A673 (cell line): ENCODE measurements at regions of chr7 and their contacts with region 1.

Region 1: DNA sequence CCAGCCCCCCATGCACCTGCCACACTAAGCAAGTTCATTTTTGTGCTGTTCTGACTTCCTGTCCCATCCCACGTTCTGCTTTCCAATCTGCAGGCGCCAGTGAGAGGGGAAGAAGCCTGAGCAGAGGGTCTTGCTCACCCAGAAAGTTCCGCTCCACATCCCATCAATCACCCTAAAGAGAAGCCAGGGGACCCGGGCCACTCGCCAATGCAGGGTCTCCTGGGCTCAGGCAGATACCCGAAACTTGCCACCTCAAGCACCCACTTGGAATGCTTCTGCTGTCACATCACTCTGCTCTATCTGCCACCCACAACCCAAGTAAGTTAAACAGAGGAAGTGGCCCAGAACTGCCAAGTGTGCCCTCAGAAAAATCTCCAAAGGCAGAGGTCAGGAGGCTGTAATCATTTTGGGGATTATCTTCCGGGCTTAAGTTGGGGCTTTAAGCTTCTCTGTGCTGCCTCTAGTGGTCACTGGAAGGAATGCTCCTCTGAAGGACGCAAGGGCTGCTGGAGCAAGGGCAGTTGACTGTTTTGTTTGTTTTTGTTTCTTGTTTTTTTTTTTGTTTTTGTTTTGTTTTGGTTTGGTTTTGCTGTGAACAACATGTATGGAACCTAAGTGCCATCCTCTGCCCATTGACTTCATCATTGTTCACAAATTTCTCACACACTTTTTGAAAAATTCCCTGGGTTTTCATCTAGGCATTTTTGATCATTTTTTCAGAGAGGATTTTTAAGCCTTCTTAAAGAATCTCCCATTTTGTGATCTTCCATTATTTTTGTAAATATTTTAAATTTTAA is 25.5 kb downstream of the PRR15 start:
- DNase-seq: peak; percentile 60
- H3K4me3 ChIP-seq: no peak overlapping the region
- H3K27ac ChIP-seq: no peak overlapping the region
- H3K4me1 ChIP-seq: no peaks in the 10 kb centered on the region
- H3K27me3 ChIP-seq: peaks cover 8% of the 10 kb centered on the region
- CTCF ChIP-seq: peak; percentile 96

Region 2: GRCh38 chr7:29627631-29628030 is 38.5 kb after region 1 on chr7:
- CTCF ChIA-PET with region 1: no interaction called
- POLR2A ChIA-PET with region 1: no interaction called
- intact Hi-C with region 1: loop called (anchors 2 kb)
- DNase-seq: no peak
- H3K4me3 ChIP-seq: no peak overlapping the region
- H3K27ac ChIP-seq: no peak overlapping the region
- H3K4me1 ChIP-seq: peaks cover 5% of the 10 kb centered on the region
- H3K27me3 ChIP-seq: no peaks in the 10 kb centered on the region
- CTCF ChIP-seq: no peak

Region 3: GRCh38 chr7:30845426-30846135 is 1256.5 kb after region 1 on chr7:
- CTCF ChIA-PET with region 1: no interaction called
- POLR2A ChIA-PET with region 1: no interaction called
- intact Hi-C with region 1: no loop called
- DNase-seq: no peak
- H3K4me3 ChIP-seq: no peak overlapping the region
- H3K27ac ChIP-seq: no peak overlapping the region
- H3K4me1 ChIP-seq: no peaks in the 10 kb centered on the region
- H3K27me3 ChIP-seq: no peaks in the 10 kb centered on the region
- CTCF ChIP-seq: no peak